Activated CD4-positive, alpha-beta T cell treated with anti-CD3 and anti-CD28 coated beads for 36 hours (primary cell): ENCODE measurements at regions of chr6 and their contacts with region 1.

Region 1: DNA sequence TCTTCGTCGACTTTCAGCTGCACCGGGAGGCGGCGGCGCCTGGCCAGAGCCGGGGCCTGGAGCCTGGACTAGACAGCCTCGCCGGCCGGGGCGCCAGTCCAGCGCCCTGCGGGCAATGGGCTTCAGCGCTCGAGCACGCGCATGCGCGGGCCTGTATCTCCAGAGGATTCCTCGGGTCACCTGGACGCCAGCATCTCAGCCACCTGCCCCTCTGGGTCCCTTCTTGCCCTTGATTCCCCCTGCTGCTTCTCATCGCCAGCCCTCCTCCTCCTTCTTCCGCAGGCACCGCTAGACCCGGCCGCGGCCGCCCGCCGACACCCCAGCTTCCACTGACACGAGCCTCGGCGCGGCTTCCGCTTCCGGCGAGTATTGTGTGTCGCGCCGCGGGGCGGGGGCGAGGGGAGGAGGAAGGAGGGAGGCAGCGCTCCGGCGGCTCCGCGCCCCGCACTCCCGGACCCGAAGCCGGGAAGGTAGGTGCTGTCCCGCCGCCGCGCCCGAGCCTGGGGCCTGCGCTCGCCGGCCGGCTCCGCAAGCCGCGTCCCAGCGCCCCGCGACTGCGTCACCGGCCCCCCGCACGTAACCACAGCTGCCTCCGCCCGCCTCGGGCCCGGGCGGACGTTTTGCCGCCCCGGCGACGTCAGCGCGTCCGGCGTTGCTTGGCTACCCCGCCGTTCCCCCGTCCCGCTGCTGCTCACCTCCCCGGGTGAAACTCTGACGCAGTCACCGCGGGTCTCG is at the start of gene TRIM39:
- DNase-seq: peak; percentile 93
- ATAC-seq: peak; percentile 60
- H3K4me3 Mint-ChIP-seq: peak within 1 kb of the TSS; percentile 86
- H3K27ac Mint-ChIP-seq: peak within 1 kb of the TSS; percentile 97
- H3K4me1 Mint-ChIP-seq: peaks cover 54% of the 10 kb centered on the region
- H3K27me3 Mint-ChIP-seq: no peaks in the 10 kb centered on the region
- total RNA-seq, gene TRIM39: 16.5 to 17.5 TPM

Region 2: GRCh38 chr6:29723262-29723665 is 603.4 kb before region 1 on chr6 and contains the start of gene HLA-F:
- CTCF ChIA-PET with region 1: no interaction called
- POLR2A ChIA-PET with region 1: no interaction called
- intact Hi-C with region 1: loop called in 1 of 2 experiments (anchors 5 kb)
- DNase-seq: peak; percentile 88
- ATAC-seq: peak; percentile 89
- H3K4me3 Mint-ChIP-seq: peak within 1 kb of the TSS; percentile 92
- H3K27ac Mint-ChIP-seq: peak within 1 kb of the TSS; percentile 94
- H3K4me1 Mint-ChIP-seq: peaks cover 49% of the 10 kb centered on the region
- H3K27me3 Mint-ChIP-seq: no peaks in the 10 kb centered on the region
- total RNA-seq, gene HLA-F: 216 to 229 TPM

Region 3: GRCh38 chr6:30102970-30103874 is 223.5 kb before region 1 on chr6:
- CTCF ChIA-PET with region 1: interaction called, 4 read pairs
- POLR2A ChIA-PET with region 1: no interaction called
- intact Hi-C with region 1: loop called in 1 of 2 experiments (anchors 5 kb)
- DNase-seq: peak; percentile 90
- ATAC-seq: peak; percentile 79
- H3K4me3 Mint-ChIP-seq: peak overlapping the region; percentile 73
- H3K27ac Mint-ChIP-seq: peak overlapping the region; percentile 65
- H3K4me1 Mint-ChIP-seq: peaks cover 36% of the 10 kb centered on the region
- H3K27me3 Mint-ChIP-seq: peaks cover 47% of the 10 kb centered on the region

Region 4: GRCh38 chr6:30194797-30195690 is 131.6 kb before region 1 on chr6:
- CTCF ChIA-PET with region 1: no interaction called
- POLR2A ChIA-PET with region 1: no interaction called
- intact Hi-C with region 1: no loop called
- DNase-seq: no peak
- ATAC-seq: no peak
- H3K4me3 Mint-ChIP-seq: no peak overlapping the region
- H3K27ac Mint-ChIP-seq: peak overlapping the region; percentile 9
- H3K4me1 Mint-ChIP-seq: no peaks in the 10 kb centered on the region
- H3K27me3 Mint-ChIP-seq: no peaks in the 10 kb centered on the region

Region 5: GRCh38 chr6:30259140-30260035 is 67.3 kb before region 1 on chr6:
- CTCF ChIA-PET with region 1: no interaction called
- POLR2A ChIA-PET with region 1: no interaction called
- intact Hi-C with region 1: loop called in 1 of 2 experiments (anchors 1 kb)
- DNase-seq: peak; percentile 80
- ATAC-seq: peak; percentile 92
- H3K4me3 Mint-ChIP-seq: peak overlapping the region; percentile 82
- H3K27ac Mint-ChIP-seq: peak overlapping the region; percentile 75
- H3K4me1 Mint-ChIP-seq: peaks cover 17% of the 10 kb centered on the region
- H3K27me3 Mint-ChIP-seq: no peaks in the 10 kb centered on the region

Region 6: DNA sequence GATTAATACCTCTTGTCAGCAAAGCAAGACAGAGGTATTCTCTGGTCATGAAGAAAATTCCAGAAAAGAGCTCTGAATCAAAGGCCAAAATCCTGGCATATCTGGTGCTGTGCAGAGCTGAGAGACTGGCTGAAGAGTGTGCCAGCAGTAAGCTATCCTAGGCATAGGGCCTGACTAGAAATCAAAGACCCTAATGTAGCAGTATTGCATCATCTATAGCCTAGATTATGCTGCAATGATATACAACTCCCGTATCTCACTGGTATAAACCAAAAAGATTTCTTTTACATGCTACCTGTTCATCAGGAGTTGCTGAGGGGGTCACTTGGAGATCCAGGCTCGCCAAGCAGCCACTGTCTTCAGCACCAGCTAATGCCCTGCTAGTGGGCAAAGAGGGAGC is 30.9 kb before region 1 on chr6:
- CTCF ChIA-PET with region 1: no interaction called
- POLR2A ChIA-PET with region 1: no interaction called
- intact Hi-C with region 1: no loop called
- DNase-seq: no peak
- ATAC-seq: no peak
- H3K4me3 Mint-ChIP-seq: no peak overlapping the region
- H3K27ac Mint-ChIP-seq: no peak overlapping the region
- H3K4me1 Mint-ChIP-seq: no peaks in the 10 kb centered on the region
- H3K27me3 Mint-ChIP-seq: no peaks in the 10 kb centered on the region

Region 7: GRCh38 chr6:30571075-30571768 is 244.5 kb after region 1 on chr6 and contains the start of gene ABCF1:
- CTCF ChIA-PET with region 1: no interaction called
- POLR2A ChIA-PET with region 1: no interaction called
- intact Hi-C with region 1: loop called in 1 of 2 experiments (anchors 1 kb)
- DNase-seq: peak; percentile 100
- ATAC-seq: peak; percentile 86
- H3K4me3 Mint-ChIP-seq: peak within 1 kb of the TSS; percentile 94
- H3K27ac Mint-ChIP-seq: peak within 1 kb of the TSS; percentile 100
- H3K4me1 Mint-ChIP-seq: peaks cover 62% of the 10 kb centered on the region
- H3K27me3 Mint-ChIP-seq: no peaks in the 10 kb centered on the region
- total RNA-seq, gene ABCF1: 100.0 to 105 TPM

Region 8: DNA sequence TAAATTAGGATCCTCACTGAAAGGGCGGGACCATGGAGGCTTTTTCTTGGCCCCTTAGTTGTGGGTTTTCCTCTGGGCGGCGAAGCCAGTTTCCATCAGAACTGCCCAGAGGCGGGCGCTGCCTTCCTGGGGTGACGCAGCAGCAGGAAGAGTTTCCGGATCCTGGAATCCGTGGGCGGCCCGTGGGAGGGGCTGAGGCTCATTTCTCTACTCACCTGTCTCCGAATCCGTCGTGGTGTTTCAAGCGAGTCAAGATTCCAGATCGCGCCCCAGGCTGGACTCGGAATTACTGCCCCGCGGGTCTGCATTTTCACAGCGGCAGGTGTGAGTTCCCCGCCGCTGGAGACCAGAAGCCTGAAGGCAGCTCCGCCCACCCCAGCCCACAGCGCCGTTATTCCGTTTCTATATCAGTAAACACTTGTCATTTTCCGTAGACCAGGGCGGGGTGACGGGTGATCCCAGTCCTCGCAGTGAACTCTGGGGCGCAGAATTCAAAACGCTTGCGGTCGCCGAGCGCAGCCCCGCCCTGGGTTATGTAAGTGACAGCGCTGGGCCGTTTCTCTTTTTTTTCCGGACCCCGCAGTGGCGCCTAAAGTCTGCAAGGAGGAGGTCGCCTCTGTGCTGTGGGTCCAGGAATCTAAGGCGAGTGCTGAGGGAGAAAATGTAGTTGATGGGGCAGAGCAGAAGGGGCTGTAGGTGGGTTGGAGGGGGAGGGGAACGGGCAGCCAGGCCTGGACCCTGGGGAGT is 871.0 kb after region 1 on chr6:
- CTCF ChIA-PET with region 1: no interaction called
- POLR2A ChIA-PET with region 1: no interaction called
- intact Hi-C with region 1: loop called in 1 of 2 experiments (anchors 5 kb)
- DNase-seq: peak; percentile 97
- ATAC-seq: peak; percentile 69
- H3K4me3 Mint-ChIP-seq: peak overlapping the region; percentile 76
- H3K27ac Mint-ChIP-seq: peak overlapping the region; percentile 80
- H3K4me1 Mint-ChIP-seq: peaks cover 50% of the 10 kb centered on the region
- H3K27me3 Mint-ChIP-seq: no peaks in the 10 kb centered on the region